Testis (tissue), 5 donors: ENCODE measurements at regions of chr11 and their contacts with region 1.

Region 1: GRCh38 chr11:124673333-124674167 is at the starts of genes SIAE and SPA17:
- DNase-seq: peak; percentile 96
- H3K4me3 ChIP-seq: peak within 1 kb of the TSS; percentile 52 to 72
- H3K27ac ChIP-seq: peak within 1 kb of the TSS; percentile 55 to 61
- H3K4me1 ChIP-seq: no peaks in the 10 kb centered on the region
- H3K27me3 ChIP-seq: no peaks in the 10 kb centered on the region
- CTCF ChIP-seq: no peak
- POLR2A ChIP-seq: no peak
- total RNA-seq, gene SIAE: 14.5 to 16.1 TPM
- total RNA-seq, gene SPA17: 97.5 to 170 TPM

Region 2: GRCh38 chr11:124724979-124725718 is 51.6 kb after region 1 on chr11:
- intact Hi-C with region 1: no loop called
- DNase-seq: no peak
- H3K4me3 ChIP-seq: no peak overlapping the region
- H3K27ac ChIP-seq: no peak overlapping the region
- H3K4me1 ChIP-seq: peaks cover 11% of the 10 kb centered on the region
- H3K27me3 ChIP-seq: no peaks in the 10 kb centered on the region
- CTCF ChIP-seq: no peak
- POLR2A ChIP-seq: no peak

Region 3: DNA sequence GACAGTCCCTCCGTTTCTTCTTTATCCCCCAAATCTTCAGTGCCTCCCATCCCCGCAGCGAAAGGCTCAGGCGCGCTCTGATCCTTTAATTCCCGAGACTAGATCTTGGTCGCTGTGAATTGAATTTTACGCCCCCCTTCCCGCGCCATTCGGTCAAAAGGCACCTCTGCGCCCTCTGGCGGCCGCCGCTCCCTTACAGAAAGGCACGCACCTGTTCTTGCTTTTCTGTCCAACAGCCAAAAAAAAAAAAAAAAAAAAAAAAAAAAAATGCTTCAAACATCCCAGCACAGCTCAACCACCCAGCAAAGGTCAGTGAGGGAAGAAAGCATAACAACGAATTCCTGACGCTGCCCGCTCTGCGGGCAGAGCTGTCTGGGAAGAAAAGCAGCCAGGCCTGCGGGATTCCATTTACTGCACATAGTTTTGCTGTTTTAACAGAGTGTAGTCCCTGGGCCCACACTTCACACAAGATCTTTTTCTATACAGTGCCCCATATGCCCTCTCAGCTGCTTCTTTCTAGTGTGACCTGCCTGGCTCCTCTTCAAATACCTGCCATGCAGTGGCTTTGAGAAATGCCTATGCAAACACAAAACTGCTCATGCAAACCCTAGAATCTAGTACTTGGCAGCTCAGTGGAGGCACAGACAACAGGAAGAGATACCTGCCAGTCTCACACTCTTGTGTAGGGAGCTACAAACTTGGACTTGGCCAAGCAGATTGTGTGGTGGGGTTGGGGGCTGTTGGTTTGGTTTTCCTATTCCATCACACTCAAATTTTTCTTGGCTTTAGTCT is 89.8 kb after region 1 on chr11:
- intact Hi-C with region 1: loop called (anchors 10 kb)
- DNase-seq: peak; percentile 88
- H3K4me3 ChIP-seq: peak overlapping the region; percentile 43 to 47
- H3K27ac ChIP-seq: no peak overlapping the region
- H3K4me1 ChIP-seq: peaks cover 18% of the 10 kb centered on the region
- H3K27me3 ChIP-seq: no peaks in the 10 kb centered on the region
- CTCF ChIP-seq: peak; percentile 47 to 64 (median 53)
- POLR2A ChIP-seq: no peak